Breast epithelium (tissue), 4 donors: ENCODE measurements at regions of chr1 and their contacts with region 1.

Region 1: GRCh38 chr1:14850566-14850965 is 252.1 kb downstream of the KAZN start:
- DNase-seq: no peak
- H3K4me3 ChIP-seq: no peak overlapping the region
- H3K27ac ChIP-seq: no peak overlapping the region
- H3K4me1 ChIP-seq: no peaks in the 10 kb centered on the region
- H3K27me3 ChIP-seq: no peaks in the 10 kb centered on the region
- CTCF ChIP-seq: no peak
- POLR2A ChIP-seq: no peak

Region 2: DNA sequence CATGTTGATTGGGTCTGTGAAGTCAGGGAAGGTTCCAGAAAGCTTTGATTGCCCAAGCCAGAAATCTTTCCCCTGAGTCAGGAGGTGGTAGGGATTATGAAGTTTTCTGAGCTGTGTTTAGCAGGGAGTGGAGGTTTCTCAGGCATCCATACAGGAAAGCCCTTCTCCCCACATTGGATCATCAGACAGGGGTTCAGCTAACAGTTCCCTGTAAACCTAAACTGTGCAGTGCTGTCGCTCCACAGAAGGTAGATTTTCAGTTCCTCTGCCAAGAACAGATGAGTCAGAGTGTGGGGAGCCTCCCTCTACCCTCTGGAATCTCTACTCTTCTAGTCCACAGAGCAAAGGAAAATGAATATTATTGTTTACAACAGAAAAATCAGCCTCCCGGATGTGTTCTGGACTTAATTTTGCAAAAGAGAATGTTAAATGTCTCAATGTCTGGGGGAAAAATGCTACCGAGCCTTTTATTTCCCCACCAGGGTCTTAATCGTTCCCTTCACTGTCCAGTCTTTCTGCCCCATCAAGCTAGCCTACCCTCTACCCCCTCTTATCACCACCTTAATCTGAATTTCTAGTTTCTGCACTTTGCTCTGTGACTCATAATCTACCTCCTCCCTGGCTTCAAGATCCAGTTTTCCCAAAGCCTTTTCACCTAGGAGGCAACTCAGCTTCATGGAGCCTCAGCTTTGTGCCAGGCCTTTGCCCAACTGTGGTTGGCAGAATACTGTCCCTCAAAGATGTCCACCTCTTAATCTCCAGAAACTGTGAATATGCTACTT is 794.9 kb before region 1 on chr1:
- intact Hi-C with region 1: loop called (anchors 10 kb)
- DNase-seq: no peak
- H3K4me3 ChIP-seq: no peak overlapping the region
- H3K27ac ChIP-seq: peak overlapping the region; percentile 48 to 52
- H3K4me1 ChIP-seq: no peaks in the 10 kb centered on the region
- H3K27me3 ChIP-seq: no peaks in the 10 kb centered on the region
- CTCF ChIP-seq: no peak
- POLR2A ChIP-seq: no peak